Left lung (tissue), 14 donors: ENCODE measurements at regions of chr11 and their contacts with region 1.

Region 1: GRCh38 chr11:87359401-87359800 is 321.7 kb downstream of the TMEM135 start:
- DNase-seq: no peak
- ATAC-seq: no peak
- H3K4me3 ChIP-seq: no peak overlapping the region
- H3K27ac ChIP-seq: no peak overlapping the region
- H3K4me1 ChIP-seq: no peaks in the 10 kb centered on the region
- H3K27me3 ChIP-seq: no peaks in the 10 kb centered on the region
- CTCF ChIP-seq: no peak

Region 2: DNA sequence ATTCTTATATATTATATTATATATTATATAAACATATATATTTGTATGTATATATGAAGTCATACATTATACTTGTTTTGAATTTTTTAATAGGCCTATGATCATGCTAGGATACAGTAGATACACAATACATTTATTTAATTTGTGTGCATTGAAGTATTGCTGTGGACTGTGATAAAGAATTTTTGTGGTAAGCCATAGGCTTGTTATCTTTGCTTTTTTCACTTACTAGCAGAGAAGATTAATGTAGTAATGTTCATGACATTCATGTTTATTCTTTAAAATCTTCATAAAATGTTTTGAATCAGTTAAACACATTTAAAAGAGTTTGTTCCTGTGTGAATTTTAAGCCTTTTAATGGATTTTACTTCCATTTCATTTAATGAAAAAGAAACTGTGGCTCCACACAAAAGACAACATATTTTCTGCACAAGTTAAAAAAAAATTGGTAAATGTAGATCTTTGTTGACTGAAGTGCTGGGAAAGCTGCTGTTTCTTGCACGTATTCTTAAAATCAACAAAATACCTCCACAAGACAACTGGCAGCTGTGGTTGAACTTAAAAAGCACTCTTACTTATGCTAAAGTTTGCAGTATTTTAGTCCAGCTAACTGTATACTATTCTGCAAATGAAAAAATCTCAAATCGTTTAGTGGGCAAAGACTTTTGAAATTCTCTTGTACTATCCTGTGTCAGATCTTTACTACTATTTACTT is 165.5 kb before region 1 on chr11:
- intact Hi-C with region 1: no loop called
- DNase-seq: peak in 2 of 4 donors; percentile 45 to 65
- ATAC-seq: no peak
- H3K4me3 ChIP-seq: no peak overlapping the region
- H3K27ac ChIP-seq: no peak overlapping the region
- H3K4me1 ChIP-seq: no peaks in the 10 kb centered on the region
- H3K27me3 ChIP-seq: no peaks in the 10 kb centered on the region
- CTCF ChIP-seq: no peak

Region 3: GRCh38 chr11:87236368-87236767 is 123.0 kb before region 1 on chr11:
- intact Hi-C with region 1: no loop called
- DNase-seq: no peak
- ATAC-seq: no peak
- H3K4me3 ChIP-seq: no peak overlapping the region
- H3K27ac ChIP-seq: no peak overlapping the region
- H3K4me1 ChIP-seq: no peaks in the 10 kb centered on the region
- H3K27me3 ChIP-seq: no peaks in the 10 kb centered on the region
- CTCF ChIP-seq: no peak

Region 4: DNA sequence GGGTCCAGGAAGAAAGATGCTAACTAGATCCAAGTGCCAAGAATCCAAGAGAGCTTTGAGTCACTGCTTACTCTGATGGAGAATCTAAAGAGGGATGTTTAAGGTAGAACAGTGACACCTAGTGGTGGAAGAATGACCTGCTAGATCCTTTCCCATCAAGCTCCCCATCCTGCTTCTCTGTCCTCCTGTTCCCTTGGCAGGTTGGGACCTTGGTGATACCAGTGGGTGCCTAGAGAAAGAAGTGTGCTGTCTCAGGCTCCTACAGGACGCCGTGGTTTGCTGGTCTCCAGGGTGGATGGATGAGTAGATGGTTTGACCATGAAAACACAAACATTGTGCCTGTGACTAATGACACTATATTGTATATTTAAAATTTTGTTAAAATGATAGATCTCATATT is 62.0 kb after region 1 on chr11:
- intact Hi-C with region 1: loop called in 1 of 2 experiments (anchors 5 kb)
- DNase-seq: peak in 2 of 4 donors; percentile 59 to 78
- ATAC-seq: peak; percentile 96
- H3K4me3 ChIP-seq: no peak overlapping the region
- H3K27ac ChIP-seq: no peak overlapping the region
- H3K4me1 ChIP-seq: no peaks in the 10 kb centered on the region
- H3K27me3 ChIP-seq: no peaks in the 10 kb centered on the region
- CTCF ChIP-seq: peak; percentile 81